Activated CD4-positive, alpha-beta memory T cell treated with anti-CD3 and anti-CD28 coated beads, Interleukin-2, amount 10 ng/mL, durations not matched to agents 7 days and 5 days (primary cell): ENCODE measurements at regions of chr3 and their contacts with region 1.

Region 1: GRCh38 chr3:190617185-190617584 is 103.3 kb downstream of the IL1RAP start:
- DNase-seq: peak; percentile 43
- H3K4me3 Mint-ChIP-seq: no peak overlapping the region
- H3K27ac Mint-ChIP-seq: peak overlapping the region; percentile 92
- H3K4me1 Mint-ChIP-seq: peaks cover 68% of the 10 kb centered on the region
- H3K27me3 Mint-ChIP-seq: no peaks in the 10 kb centered on the region

Region 2: GRCh38 chr3:190513409-190514162 is 103.6 kb before region 1 on chr3 and contains the start of gene IL1RAP:
- CTCF ChIA-PET with region 1: interaction called, 13 read pairs
- POLR2A ChIA-PET with region 1: interaction called, 50 read pairs
- DNase-seq: peak; percentile 90
- H3K4me3 Mint-ChIP-seq: peak within 1 kb of the TSS; percentile 75
- H3K27ac Mint-ChIP-seq: peak within 1 kb of the TSS; percentile 90
- H3K4me1 Mint-ChIP-seq: peaks cover 40% of the 10 kb centered on the region
- H3K27me3 Mint-ChIP-seq: peaks cover 5% of the 10 kb centered on the region
- total RNA-seq, gene IL1RAP: 14.2 to 15.2 TPM

Region 3: GRCh38 chr3:190585805-190586630 is 31.2 kb before region 1 on chr3:
- CTCF ChIA-PET with region 1: no interaction called
- POLR2A ChIA-PET with region 1: interaction called, 19 read pairs
- DNase-seq: peak; percentile 58
- H3K4me3 Mint-ChIP-seq: peak overlapping the region; percentile 35
- H3K27ac Mint-ChIP-seq: peak overlapping the region; percentile 87
- H3K4me1 Mint-ChIP-seq: peaks cover 49% of the 10 kb centered on the region
- H3K27me3 Mint-ChIP-seq: no peaks in the 10 kb centered on the region

Region 4: GRCh38 chr3:190709351-190709773 is 92.2 kb after region 1 on chr3:
- CTCF ChIA-PET with region 1: no interaction called
- POLR2A ChIA-PET with region 1: no interaction called
- DNase-seq: no peak
- H3K4me3 Mint-ChIP-seq: no peak overlapping the region
- H3K27ac Mint-ChIP-seq: no peak overlapping the region
- H3K4me1 Mint-ChIP-seq: no peaks in the 10 kb centered on the region
- H3K27me3 Mint-ChIP-seq: peaks cover 15% of the 10 kb centered on the region